Gastrocnemius medialis (tissue), 4 donors: ENCODE measurements at regions of chr6 and their contacts with region 1.

Region 1: GRCh38 chr6:52419809-52420670 is at the start of gene EFHC1:
- DNase-seq: peak; percentile 93 to 96
- ATAC-seq: peak; percentile 94 to 96
- H3K4me3 ChIP-seq: peak within 1 kb of the TSS; percentile 70 to 91 (median 85)
- H3K27ac ChIP-seq: peak within 1 kb of the TSS; percentile 77 to 84 (median 82)
- H3K4me1 ChIP-seq: peaks cover 9 to 13% of the 10 kb centered on the region in 2 donors
- H3K27me3 ChIP-seq: no peaks in the 10 kb centered on the region
- CTCF ChIP-seq: no peak
- POLR2A ChIP-seq: peak; percentile 50 to 64
- total RNA-seq, gene EFHC1: 0.46 to 9.3 (median 1.5) TPM

Region 2: GRCh38 chr6:52284460-52285176 is 135.4 kb before region 1 on chr6 and contains the start of gene MCM3:
- in situ Hi-C with region 1: loop called in 1 of 4 experiments (anchors 10 kb)
- intact Hi-C with region 1: loop called (anchors 10 kb)
- DNase-seq: peak; percentile 96 to 98
- ATAC-seq: peak; percentile 100
- H3K4me3 ChIP-seq: peak within 1 kb of the TSS; percentile 75 to 91 (median 82)
- H3K27ac ChIP-seq: peak within 1 kb of the TSS; percentile 55 to 76 (median 70)
- H3K4me1 ChIP-seq: peaks cover 15 to 18% of the 10 kb centered on the region in 2 donors
- H3K27me3 ChIP-seq: no peaks in the 10 kb centered on the region
- CTCF ChIP-seq: peak in 1 of 5 experiments; percentile 23
- POLR2A ChIP-seq: no peak
- total RNA-seq, gene MCM3: 9.1 to 12.9 (median 9.8) TPM

Region 3: DNA sequence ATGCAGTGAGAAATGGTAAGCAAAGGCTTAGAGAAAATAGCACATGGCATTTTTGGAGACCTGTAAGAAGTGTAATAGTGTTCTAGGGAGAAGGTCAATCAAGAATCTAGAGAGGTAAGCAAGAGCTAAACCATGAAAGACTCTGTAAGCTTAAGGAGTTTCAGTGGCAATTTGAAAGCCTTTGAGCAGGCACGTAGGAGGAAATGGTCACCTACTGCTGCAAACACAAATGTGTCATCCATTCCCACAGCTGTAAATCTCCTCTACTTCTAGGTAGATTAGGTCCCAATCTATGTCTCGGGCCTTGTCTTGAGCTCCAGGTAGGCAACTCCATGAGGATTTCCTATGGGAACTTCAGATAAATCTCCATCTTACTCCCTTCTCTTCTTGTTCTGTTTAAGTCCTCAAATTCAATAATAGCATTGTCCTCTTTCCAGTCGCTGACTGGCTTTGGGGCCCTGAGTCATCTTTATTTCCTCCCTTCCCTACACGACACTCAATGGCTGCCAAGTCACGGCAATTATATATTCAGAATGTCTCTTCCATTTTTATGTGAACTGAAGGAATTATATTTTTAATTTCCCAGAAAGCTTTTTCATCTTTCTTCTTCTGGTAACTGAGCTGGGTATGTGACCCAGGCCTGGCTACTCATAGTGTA is 82.3 kb before region 1 on chr6:
- in situ Hi-C with region 1: no loop called
- intact Hi-C with region 1: no loop called
- DNase-seq: no peak
- ATAC-seq: no peak
- H3K4me3 ChIP-seq: no peak overlapping the region
- H3K27ac ChIP-seq: no peak overlapping the region
- H3K4me1 ChIP-seq: no peaks in the 10 kb centered on the region
- H3K27me3 ChIP-seq: no peaks in the 10 kb centered on the region
- CTCF ChIP-seq: no peak
- POLR2A ChIP-seq: no peak

Region 4: DNA sequence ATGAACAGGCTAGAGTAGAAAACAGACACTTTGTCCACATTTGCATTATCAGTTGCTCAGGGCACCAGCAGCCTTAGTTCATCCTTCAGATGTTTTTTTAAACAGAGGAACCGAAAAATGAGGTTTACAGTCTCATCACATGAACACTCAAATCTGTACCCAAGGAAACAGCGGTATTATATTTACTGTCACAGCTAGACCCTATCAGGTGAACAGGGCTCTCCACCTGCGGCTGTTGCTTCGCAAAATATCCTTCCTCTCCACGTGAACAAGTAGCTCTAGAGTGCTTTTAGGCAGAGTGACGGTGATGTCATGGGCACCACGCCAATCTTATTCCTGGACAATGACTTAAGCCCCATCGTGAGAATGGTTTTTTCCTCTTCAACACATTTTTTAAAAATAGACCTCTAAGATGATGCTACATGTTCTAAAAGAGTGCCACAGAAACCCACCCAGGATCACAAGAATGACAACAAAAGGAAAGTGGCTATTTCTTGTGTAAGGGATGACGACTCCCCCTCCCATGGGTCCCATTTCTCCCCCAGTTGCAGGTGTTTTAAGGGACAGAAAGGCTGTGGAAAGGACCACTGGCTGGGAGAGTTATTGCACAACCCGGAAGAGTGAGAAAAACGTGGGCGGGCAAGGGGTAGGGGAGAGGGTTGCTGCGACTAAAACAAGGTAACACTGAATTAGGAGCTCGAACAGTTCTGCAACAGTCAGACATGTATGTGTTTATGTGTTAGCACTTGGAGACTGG is 77.8 kb after region 1 on chr6:
- in situ Hi-C with region 1: loop called in 3 of 4 experiments (anchors 5 to 10 kb)
- intact Hi-C with region 1: loop called (anchors 1 kb)
- DNase-seq: no peak
- ATAC-seq: no peak
- H3K4me3 ChIP-seq: no peak overlapping the region
- H3K27ac ChIP-seq: peak overlapping the region; percentile 12 to 82 (median 69)
- H3K4me1 ChIP-seq: peaks cover 26 to 35% of the 10 kb centered on the region in 2 donors
- H3K27me3 ChIP-seq: no peaks in the 10 kb centered on the region
- CTCF ChIP-seq: no peak
- POLR2A ChIP-seq: no peak

Region 5: GRCh38 chr6:52577022-52577777 is 157.2 kb after region 1 on chr6 and contains the start of gene TRAM2:
- in situ Hi-C with region 1: no loop called
- intact Hi-C with region 1: loop called (anchors 1 kb)
- DNase-seq: peak; percentile 63 to 69
- ATAC-seq: peak; percentile 86 to 87
- H3K4me3 ChIP-seq: peak within 1 kb of the TSS; percentile 72 to 82 (median 79)
- H3K27ac ChIP-seq: peak within 1 kb of the TSS; percentile 88 to 95 (median 93)
- H3K4me1 ChIP-seq: peaks cover 29 to 32% of the 10 kb centered on the region in 2 donors
- H3K27me3 ChIP-seq: no peaks in the 10 kb centered on the region
- CTCF ChIP-seq: peak in 1 of 5 experiments; percentile 4
- POLR2A ChIP-seq: peak in 1 of 2 donors; percentile 31
- total RNA-seq, gene TRAM2: 2.4 to 4.5 (median 3.6) TPM

Region 6: GRCh38 chr6:52598123-52598823 is 178.2 kb after region 1 on chr6:
- in situ Hi-C with region 1: loop called (anchors 5 kb)
- intact Hi-C with region 1: loop called (anchors 1 kb)
- DNase-seq: peak in 1 of 2 donors; percentile 40
- ATAC-seq: peak; percentile 39 to 79
- H3K4me3 ChIP-seq: peak overlapping the region in 3 of 4 donors; percentile 22 to 42 (median 35)
- H3K27ac ChIP-seq: no peak overlapping the region
- H3K4me1 ChIP-seq: peaks cover 0 to 15% of the 10 kb centered on the region in 2 donors
- H3K27me3 ChIP-seq: no peaks in the 10 kb centered on the region
- CTCF ChIP-seq: peak; percentile 55 to 74 (median 70)
- POLR2A ChIP-seq: no peak

Region 7: GRCh38 chr6:52647199-52647598 is 227.2 kb after region 1 on chr6:
- in situ Hi-C with region 1: loop called in 1 of 4 experiments (anchors 5 kb)
- intact Hi-C with region 1: no loop called
- DNase-seq: no peak
- ATAC-seq: no peak
- H3K4me3 ChIP-seq: no peak overlapping the region
- H3K27ac ChIP-seq: no peak overlapping the region
- H3K4me1 ChIP-seq: no peaks in the 10 kb centered on the region
- H3K27me3 ChIP-seq: no peaks in the 10 kb centered on the region
- CTCF ChIP-seq: no peak
- POLR2A ChIP-seq: no peak

Region 8: DNA sequence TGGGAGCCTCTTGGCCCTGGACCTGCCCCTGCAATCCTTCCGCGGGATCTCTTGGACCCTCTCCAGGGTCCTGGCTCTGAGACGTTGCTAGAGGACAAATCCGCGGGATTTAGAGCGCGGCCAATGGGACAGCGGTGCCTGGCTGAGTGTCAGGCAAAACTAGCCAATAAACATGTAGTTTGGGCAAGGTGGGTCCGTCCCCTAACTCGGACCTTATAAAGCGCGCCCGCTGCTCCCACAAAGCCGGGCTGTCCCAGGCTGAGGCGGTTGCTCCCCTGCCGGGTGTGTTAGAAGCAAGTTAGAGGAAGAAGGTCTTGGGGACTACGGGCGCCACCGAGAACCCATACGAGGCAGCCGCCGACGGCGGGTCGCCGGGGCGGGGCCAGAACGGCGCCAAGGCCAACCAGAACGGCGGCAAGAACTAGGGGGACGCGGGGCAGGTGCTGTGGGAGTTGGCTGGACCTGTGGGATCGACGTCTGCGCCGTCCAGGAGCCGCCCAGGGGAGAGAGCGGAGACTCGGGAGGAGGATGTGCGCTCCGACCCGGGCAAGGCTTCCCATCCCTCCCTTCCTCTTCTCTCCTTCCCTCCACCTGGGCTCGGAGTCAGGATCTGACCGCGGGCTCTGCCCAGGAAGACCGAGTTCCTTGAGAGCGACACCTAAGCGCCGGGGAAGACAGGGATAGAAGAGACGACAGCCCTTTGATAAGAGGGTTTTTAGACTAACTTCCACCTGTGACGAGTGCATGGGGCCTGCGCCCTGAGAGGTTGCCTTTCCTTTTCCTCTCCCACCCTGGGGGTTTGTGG is 244.3 kb after region 1 on chr6:
- in situ Hi-C with region 1: loop called in 3 of 4 experiments (anchors 5 kb)
- intact Hi-C with region 1: loop called (anchors 1 kb)
- DNase-seq: peak; percentile 66 to 87
- ATAC-seq: peak; percentile 92 to 98
- H3K4me3 ChIP-seq: peak overlapping the region; percentile 66 to 76 (median 67)
- H3K27ac ChIP-seq: peak overlapping the region; percentile 51 to 73 (median 54)
- H3K4me1 ChIP-seq: peaks cover 0 to 4% of the 10 kb centered on the region in 2 donors
- H3K27me3 ChIP-seq: no peaks in the 10 kb centered on the region
- CTCF ChIP-seq: no peak
- POLR2A ChIP-seq: peak; percentile 49 to 62